Activated CD4-positive, alpha-beta T cell treated with anti-CD3 and anti-CD28 coated beads for 36 hours (primary cell): ENCODE measurements at regions of chr3 and their contacts with region 1.

Region 1: GRCh38 chr3:30693470-30694120 is 87.2 kb downstream of the TGFBR2 start:
- DNase-seq: peak; percentile 53
- ATAC-seq: peak; percentile 81
- H3K4me3 Mint-ChIP-seq: no peak overlapping the region
- H3K27ac Mint-ChIP-seq: peak overlapping the region; percentile 67
- H3K4me1 Mint-ChIP-seq: peaks cover 61% of the 10 kb centered on the region
- H3K27me3 Mint-ChIP-seq: no peaks in the 10 kb centered on the region

Region 2: GRCh38 chr3:30042274-30042859 is 651.2 kb before region 1 on chr3:
- CTCF ChIA-PET with region 1: interaction called, 9 read pairs
- POLR2A ChIA-PET with region 1: no interaction called
- intact Hi-C with region 1: loop called (anchors 2 kb)
- DNase-seq: peak; percentile 75
- ATAC-seq: no peak
- H3K4me3 Mint-ChIP-seq: no peak overlapping the region
- H3K27ac Mint-ChIP-seq: no peak overlapping the region
- H3K4me1 Mint-ChIP-seq: peaks cover 3% of the 10 kb centered on the region
- H3K27me3 Mint-ChIP-seq: peaks cover 13% of the 10 kb centered on the region

Region 3: DNA sequence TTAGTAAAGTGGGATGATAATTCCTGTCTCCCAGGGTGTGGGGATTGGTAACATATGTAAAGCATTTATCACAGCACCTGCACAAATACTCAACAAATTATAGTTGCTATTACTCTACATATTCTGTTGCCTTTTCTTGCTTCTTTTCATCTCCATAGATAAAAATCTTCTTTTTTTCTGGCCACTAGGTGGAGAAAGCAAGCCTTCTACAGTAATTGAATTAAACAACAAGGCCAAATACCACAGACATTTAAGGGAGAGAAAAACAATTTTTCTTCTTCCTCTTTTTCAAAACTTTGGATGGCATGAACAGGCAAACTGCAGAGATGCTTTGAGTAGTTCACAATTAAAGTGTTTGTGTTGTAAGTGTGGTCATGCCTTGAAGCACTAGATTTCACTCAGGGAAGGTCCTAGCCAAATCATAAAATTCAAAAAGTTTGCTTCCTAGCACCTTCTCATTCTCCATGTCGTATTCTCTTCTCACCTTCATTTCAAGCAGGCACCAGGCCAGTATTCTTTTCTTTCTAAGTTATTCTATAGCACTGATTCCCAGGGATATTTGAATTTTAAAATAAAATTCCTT is 580.6 kb before region 1 on chr3:
- CTCF ChIA-PET with region 1: no interaction called
- POLR2A ChIA-PET with region 1: no interaction called
- intact Hi-C with region 1: loop called (anchors 1 to 2 kb)
- DNase-seq: no peak
- ATAC-seq: peak; percentile 19
- H3K4me3 Mint-ChIP-seq: no peak overlapping the region
- H3K27ac Mint-ChIP-seq: no peak overlapping the region
- H3K4me1 Mint-ChIP-seq: peaks cover 6% of the 10 kb centered on the region
- H3K27me3 Mint-ChIP-seq: no peaks in the 10 kb centered on the region

Region 4: GRCh38 chr3:30206051-30206450 is 487.5 kb before region 1 on chr3:
- CTCF ChIA-PET with region 1: no interaction called
- POLR2A ChIA-PET with region 1: no interaction called
- intact Hi-C with region 1: loop called in 1 of 2 experiments (anchors 5 kb)
- DNase-seq: no peak
- ATAC-seq: no peak
- H3K4me3 Mint-ChIP-seq: no peak overlapping the region
- H3K27ac Mint-ChIP-seq: no peak overlapping the region
- H3K4me1 Mint-ChIP-seq: peaks cover 15% of the 10 kb centered on the region
- H3K27me3 Mint-ChIP-seq: no peaks in the 10 kb centered on the region

Region 5: GRCh38 chr3:30681643-30682211 is 11.9 kb before region 1 on chr3:
- CTCF ChIA-PET with region 1: interaction called, 13 read pairs
- POLR2A ChIA-PET with region 1: no interaction called
- intact Hi-C with region 1: no loop called
- DNase-seq: peak; percentile 40
- ATAC-seq: peak; percentile 21
- H3K4me3 Mint-ChIP-seq: peak overlapping the region; percentile 6
- H3K27ac Mint-ChIP-seq: peak overlapping the region; percentile 83
- H3K4me1 Mint-ChIP-seq: peaks cover 95% of the 10 kb centered on the region
- H3K27me3 Mint-ChIP-seq: no peaks in the 10 kb centered on the region

Region 6: GRCh38 chr3:30952786-30953185 is 259.2 kb after region 1 on chr3:
- CTCF ChIA-PET with region 1: no interaction called
- POLR2A ChIA-PET with region 1: no interaction called
- intact Hi-C with region 1: no loop called
- DNase-seq: no peak
- ATAC-seq: no peak
- H3K4me3 Mint-ChIP-seq: no peak overlapping the region
- H3K27ac Mint-ChIP-seq: no peak overlapping the region
- H3K4me1 Mint-ChIP-seq: peaks cover 2% of the 10 kb centered on the region
- H3K27me3 Mint-ChIP-seq: no peaks in the 10 kb centered on the region

Region 7: GRCh38 chr3:31416980-31417379 is 723.4 kb after region 1 on chr3:
- CTCF ChIA-PET with region 1: no interaction called
- POLR2A ChIA-PET with region 1: no interaction called
- intact Hi-C with region 1: loop called in 1 of 2 experiments (anchors 5 kb)
- DNase-seq: no peak
- ATAC-seq: no peak
- H3K4me3 Mint-ChIP-seq: no peak overlapping the region
- H3K27ac Mint-ChIP-seq: no peak overlapping the region
- H3K4me1 Mint-ChIP-seq: peaks cover 7% of the 10 kb centered on the region
- H3K27me3 Mint-ChIP-seq: no peaks in the 10 kb centered on the region